Aorta (tissue), 5 donors: ENCODE measurements at regions of chr12 and their contacts with region 1.

Region 1: GRCh38 chr12:122526683-122527477 is at the starts of genes KNTC1 and RSRC2:
- DNase-seq: peak; percentile 97 to 99
- ATAC-seq: peak; percentile 99
- H3K4me3 ChIP-seq: peak within 1 kb of the TSS; percentile 95 to 97
- H3K27ac ChIP-seq: peak within 1 kb of the TSS; percentile 93 to 98
- H3K4me1 ChIP-seq: peaks cover 0 to 2% of the 10 kb centered on the region in 2 donors
- H3K27me3 ChIP-seq: no peaks in the 10 kb centered on the region
- total RNA-seq, gene KNTC1: 11.1 to 18.4 TPM
- total RNA-seq, gene RSRC2: 68.5 to 71.2 TPM

Region 2: GRCh38 chr12:122752464-122753318 is 225.8 kb after region 1 on chr12 and contains the start of gene DENR:
- intact Hi-C with region 1: loop called (anchors 10 kb)
- DNase-seq: peak; percentile 99 to 100
- ATAC-seq: peak; percentile 99
- H3K4me3 ChIP-seq: peak within 1 kb of the TSS; percentile 6 to 54
- H3K27ac ChIP-seq: no peak within 1 kb of the TSS
- H3K4me1 ChIP-seq: no peaks in the 10 kb centered on the region
- H3K27me3 ChIP-seq: no peaks in the 10 kb centered on the region
- total RNA-seq, gene DENR: 27.0 to 37.1 TPM